ENCODE measurements at regions of chr2 and their contacts with region 1.

Region 1: DNA sequence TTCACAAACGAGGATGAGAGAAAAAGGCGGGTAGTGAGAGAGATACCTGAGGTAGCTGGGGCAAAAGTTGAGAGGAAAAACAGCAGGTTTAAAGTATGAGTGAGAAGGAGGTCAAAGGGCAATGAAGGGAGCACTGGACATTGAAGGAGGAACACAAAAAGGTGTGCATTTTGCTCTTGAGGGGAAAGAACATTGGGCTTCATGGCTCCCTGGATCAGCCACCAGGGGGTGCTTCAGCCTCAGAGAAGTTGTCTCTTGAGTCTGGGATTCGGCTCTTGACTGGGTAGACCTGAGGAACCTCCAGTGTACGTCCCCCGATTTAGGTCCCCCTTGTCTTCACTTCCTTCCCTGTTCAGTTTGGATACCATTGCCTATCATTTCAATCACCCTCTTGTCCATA is 128.5 kb downstream of the RAPGEF4 start:
- DNase-seq: peak in 7 of 10 donors; percentile 35 to 89 (median 64)

Region 2: GRCh38 chr2:172931918-172932520 is 67.8 kb after region 1 on chr2:
- intact Hi-C with region 1: loop called (anchors 1 kb)
- DNase-seq: peak in 7 of 10 donors; percentile 39 to 90 (median 72)

Measured in posterior cingulate gyrus (tissue), 11 donors.